Activated naive CD4-positive, alpha-beta T cell treated with anti-CD3 and anti-CD28 coated beads for 36 hours (primary cell): ENCODE measurements at regions of chr5 and their contacts with region 1.

Region 1: DNA sequence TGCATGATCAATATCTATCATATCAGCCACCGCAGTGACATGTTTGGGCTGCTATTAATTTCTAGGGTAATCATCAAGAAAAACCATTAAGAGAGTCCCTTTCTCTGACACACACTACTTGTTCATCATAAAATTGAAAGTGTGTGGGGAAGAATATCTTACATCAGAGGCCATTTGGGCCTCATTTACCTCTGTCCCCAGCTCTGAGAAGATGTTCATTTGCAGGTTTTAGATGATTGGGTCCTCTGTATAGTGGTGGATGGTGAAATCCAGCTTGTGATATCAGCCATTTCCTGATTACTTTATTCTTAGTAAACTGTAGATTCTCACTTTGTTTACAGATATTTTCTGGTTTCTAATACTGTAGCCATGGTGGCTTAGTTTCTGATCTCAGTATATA is 29.8 kb upstream of the PJA2 start:
- DNase-seq: no peak
- H3K4me3 Mint-ChIP-seq: no peak overlapping the region
- H3K27ac Mint-ChIP-seq: no peak overlapping the region
- H3K4me1 Mint-ChIP-seq: no peaks in the 10 kb centered on the region
- H3K27me3 Mint-ChIP-seq: no peaks in the 10 kb centered on the region

Region 2: GRCh38 chr5:108260117-108260857 is 1179.3 kb before region 1 on chr5:
- CTCF ChIA-PET with region 1: no interaction called
- intact Hi-C with region 1: loop called (anchors 2 kb)
- DNase-seq: peak; percentile 83
- H3K4me3 Mint-ChIP-seq: peak overlapping the region; percentile 48
- H3K27ac Mint-ChIP-seq: no peak overlapping the region
- H3K4me1 Mint-ChIP-seq: peaks cover 9% of the 10 kb centered on the region
- H3K27me3 Mint-ChIP-seq: no peaks in the 10 kb centered on the region

Region 3: DNA sequence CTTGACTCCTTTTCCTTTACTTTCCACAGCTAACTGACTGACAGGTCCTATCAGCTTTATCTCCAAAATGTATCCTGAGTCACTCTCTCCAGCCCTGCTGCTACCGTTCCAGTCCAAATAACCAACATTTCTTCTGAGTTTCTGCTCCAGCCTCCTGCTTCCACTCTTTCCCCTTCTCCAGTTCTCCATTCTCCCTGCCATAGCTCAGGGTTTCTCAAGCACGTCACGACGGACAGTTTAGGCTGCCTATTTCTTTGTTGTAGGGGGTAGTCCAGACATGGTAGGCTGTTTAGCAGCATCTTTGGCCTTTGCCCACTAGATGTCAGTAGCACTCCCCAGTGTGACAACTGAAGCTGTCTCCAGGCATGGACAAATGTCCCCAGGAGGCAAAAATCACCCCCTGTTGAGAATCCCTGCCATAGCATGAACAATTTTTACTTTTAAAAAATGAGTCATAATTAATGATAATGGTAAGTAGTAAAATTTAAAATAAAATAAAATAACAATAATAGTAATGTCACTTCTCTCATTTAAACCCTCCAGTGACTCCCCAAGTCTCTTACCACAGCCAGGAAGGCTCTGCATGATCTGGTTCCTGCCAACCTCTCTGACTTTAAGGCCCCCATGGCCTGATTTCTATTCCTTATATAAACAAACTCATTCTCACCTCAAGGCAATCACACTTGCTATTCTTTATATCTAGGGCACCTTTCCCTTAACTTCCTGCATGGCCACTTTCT is 797.3 kb before region 1 on chr5:
- CTCF ChIA-PET with region 1: no interaction called
- intact Hi-C with region 1: loop called (anchors 1 kb)
- DNase-seq: peak; percentile 77
- H3K4me3 Mint-ChIP-seq: peak overlapping the region; percentile 16
- H3K27ac Mint-ChIP-seq: no peak overlapping the region
- H3K4me1 Mint-ChIP-seq: peaks cover 2% of the 10 kb centered on the region
- H3K27me3 Mint-ChIP-seq: peaks cover 14% of the 10 kb centered on the region

Region 4: DNA sequence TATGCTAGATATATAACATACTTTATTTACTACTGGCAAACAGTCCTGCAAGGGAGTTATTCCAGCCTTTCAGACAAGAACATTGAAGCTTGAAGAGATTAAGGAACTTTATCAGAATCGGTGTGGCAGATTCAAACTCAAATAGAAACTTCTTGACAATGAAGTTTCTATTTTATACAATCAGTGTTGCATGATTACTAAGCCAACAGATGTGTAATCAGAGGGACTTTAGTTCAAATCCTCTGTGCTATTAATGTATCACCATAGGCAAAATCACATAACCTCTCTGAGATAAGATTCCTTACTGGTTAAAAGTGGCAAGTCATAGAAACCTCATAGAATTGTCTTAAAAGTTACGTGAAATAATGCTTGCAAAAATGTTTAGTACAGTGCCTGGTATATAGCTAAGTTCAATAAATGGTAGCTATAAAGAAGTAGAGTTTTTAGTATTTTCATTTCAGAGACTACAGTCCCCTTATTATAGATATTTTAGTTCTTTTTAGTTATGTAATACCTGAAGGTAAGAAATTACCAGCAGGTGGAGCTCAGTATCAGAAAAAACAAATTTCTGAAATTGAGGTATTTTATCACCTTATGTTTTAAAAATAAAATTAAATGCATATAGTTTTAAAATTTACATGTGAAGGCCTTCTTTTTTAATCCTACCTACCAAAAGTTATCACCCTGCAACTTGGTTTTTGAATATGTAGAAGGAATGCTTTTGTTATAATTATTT is 519.8 kb before region 1 on chr5:
- CTCF ChIA-PET with region 1: no interaction called
- intact Hi-C with region 1: loop called (anchors 1 kb)
- DNase-seq: no peak
- H3K4me3 Mint-ChIP-seq: no peak overlapping the region
- H3K27ac Mint-ChIP-seq: no peak overlapping the region
- H3K4me1 Mint-ChIP-seq: peaks cover 2% of the 10 kb centered on the region
- H3K27me3 Mint-ChIP-seq: no peaks in the 10 kb centered on the region

Region 5: DNA sequence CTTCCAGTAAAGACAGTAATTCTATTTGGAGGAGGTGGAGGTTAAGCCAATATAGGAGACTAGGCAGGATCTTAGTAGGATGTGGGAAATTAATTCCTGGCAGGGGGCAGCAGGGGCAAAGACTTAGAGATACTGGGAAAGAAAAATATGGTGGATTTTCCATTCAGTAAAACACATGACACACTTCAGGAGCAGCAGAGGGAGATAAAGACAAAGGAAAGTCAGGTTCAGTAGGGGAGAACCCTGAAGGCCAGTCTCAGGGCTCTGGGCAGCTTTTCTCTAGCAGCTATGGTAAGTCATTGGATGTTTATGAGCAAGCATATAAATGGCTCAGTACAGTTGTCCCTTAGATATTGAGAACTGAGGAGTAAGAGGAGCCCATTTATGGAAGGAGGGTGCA is 135.3 kb before region 1 on chr5:
- CTCF ChIA-PET with region 1: no interaction called
- intact Hi-C with region 1: loop called (anchors 2 kb)
- DNase-seq: no peak
- H3K4me3 Mint-ChIP-seq: no peak overlapping the region
- H3K27ac Mint-ChIP-seq: no peak overlapping the region
- H3K4me1 Mint-ChIP-seq: no peaks in the 10 kb centered on the region
- H3K27me3 Mint-ChIP-seq: peaks cover 2% of the 10 kb centered on the region

Region 6: DNA sequence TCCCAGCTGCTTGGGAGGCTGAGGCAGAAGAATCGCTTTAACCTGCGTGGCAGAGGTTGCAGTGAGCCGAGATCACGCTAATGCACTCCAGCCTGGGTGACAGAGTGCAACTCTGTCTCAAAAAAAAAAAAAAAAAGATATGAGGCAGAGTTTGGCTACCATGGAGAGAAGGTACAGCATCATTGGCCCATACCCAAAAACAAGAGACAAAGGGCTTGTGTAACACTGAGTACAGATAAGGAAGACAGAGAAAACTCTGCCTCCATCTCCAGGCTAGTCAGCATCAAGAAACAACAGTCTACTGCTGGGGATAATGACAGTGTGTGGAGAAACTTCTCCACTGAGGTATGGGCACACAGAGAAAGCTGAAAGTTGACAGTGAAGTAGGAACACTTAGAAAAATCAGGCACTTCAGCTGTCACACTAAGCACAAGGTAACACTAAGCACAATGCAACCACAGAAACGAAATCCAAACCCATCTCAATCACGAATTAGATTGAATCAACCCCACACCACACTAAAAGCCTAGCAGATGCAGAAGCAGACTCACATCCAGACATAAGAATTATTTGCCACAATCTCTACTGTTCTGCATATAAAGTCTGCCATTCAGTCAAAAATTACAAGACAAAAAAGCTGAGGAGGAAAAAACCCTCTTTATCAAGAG is 40.4 kb before region 1 on chr5:
- CTCF ChIA-PET with region 1: no interaction called
- intact Hi-C with region 1: no loop called
- DNase-seq: no peak
- H3K4me3 Mint-ChIP-seq: no peak overlapping the region
- H3K27ac Mint-ChIP-seq: no peak overlapping the region
- H3K4me1 Mint-ChIP-seq: peaks cover 79% of the 10 kb centered on the region
- H3K27me3 Mint-ChIP-seq: no peaks in the 10 kb centered on the region